Endothelial cell of umbilical vein (primary cell): ENCODE measurements at regions of chr11 and their contacts with region 1.

Region 1: GRCh38 chr11:18395735-18396504 is 1.6 kb downstream of the LDHA start:
- DNase-seq: peak; percentile 100
- H3K4me3 ChIP-seq: peak overlapping the region; percentile 42 to 80 (median 65)
- H3K27ac ChIP-seq: peak overlapping the region; percentile 56
- H3K4me1 ChIP-seq: peaks cover 18% of the 10 kb centered on the region
- H3K27me3 ChIP-seq: no peaks in the 10 kb centered on the region
- CTCF ChIP-seq: no peak
- POLR2A ChIP-seq: peak; percentile 83

Region 2: DNA sequence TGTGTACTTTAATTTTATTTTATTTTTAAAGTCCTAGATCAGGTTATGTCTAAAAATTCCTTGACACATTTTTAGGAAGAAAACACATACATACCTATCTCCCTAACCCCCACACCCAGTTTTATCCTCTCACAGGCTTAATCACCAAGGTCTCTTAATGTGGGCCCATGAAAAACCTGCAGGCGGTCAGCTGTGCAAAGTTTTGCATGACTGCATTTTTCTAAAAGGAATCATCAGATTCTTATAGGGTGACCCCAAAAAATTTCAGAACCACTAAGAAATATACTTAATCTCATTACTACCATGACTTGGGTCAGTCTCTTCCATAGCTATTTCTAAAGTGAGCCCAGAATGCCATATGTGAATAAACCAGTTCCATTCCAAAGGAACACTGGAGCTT is 110.1 kb before region 1 on chr11:
- CTCF ChIA-PET with region 1: no interaction called
- POLR2A ChIA-PET with region 1: interaction called, 10 read pairs
- dilution Hi-C with region 1: no loop called
- intact Hi-C with region 1: no loop called
- DNase-seq: no peak
- H3K4me3 ChIP-seq: no peak overlapping the region
- H3K27ac ChIP-seq: no peak overlapping the region
- H3K4me1 ChIP-seq: no peaks in the 10 kb centered on the region
- H3K27me3 ChIP-seq: no peaks in the 10 kb centered on the region
- CTCF ChIP-seq: no peak
- POLR2A ChIP-seq: no peak

Region 3: DNA sequence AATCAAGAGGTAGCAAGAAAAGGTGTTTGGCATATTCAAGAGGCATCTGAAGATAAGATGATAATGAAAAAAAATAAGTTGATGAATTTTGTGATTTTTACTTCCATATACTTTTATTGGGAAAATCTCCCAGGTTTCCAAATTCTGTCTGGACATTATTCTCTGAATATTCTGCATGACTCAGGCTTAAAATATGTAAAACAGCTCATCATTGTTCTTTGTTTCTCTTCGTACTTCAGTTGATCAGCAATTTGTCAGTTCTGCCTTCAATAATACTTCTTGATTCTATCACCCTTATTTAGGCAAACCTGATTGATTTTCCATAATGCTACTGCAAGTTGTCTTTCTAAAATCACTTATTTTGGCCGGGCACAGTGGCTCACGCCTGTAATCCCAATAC is 43.3 kb before region 1 on chr11:
- CTCF ChIA-PET with region 1: interaction called, 3 read pairs
- POLR2A ChIA-PET with region 1: no interaction called
- dilution Hi-C with region 1: no loop called
- intact Hi-C with region 1: loop called (anchors 5 kb)
- DNase-seq: no peak
- H3K4me3 ChIP-seq: no peak overlapping the region
- H3K27ac ChIP-seq: no peak overlapping the region
- H3K4me1 ChIP-seq: peaks cover 8% of the 10 kb centered on the region
- H3K27me3 ChIP-seq: no peaks in the 10 kb centered on the region
- CTCF ChIP-seq: no peak
- POLR2A ChIP-seq: no peak

Region 4: GRCh38 chr11:18368221-18368620 is 27.7 kb before region 1 on chr11:
- CTCF ChIA-PET with region 1: no interaction called
- POLR2A ChIA-PET with region 1: interaction called, 11 read pairs
- dilution Hi-C with region 1: no loop called
- intact Hi-C with region 1: no loop called
- DNase-seq: no peak
- H3K4me3 ChIP-seq: no peak overlapping the region
- H3K27ac ChIP-seq: no peak overlapping the region
- H3K4me1 ChIP-seq: no peaks in the 10 kb centered on the region
- H3K27me3 ChIP-seq: no peaks in the 10 kb centered on the region
- CTCF ChIP-seq: no peak
- POLR2A ChIP-seq: no peak

Region 5: GRCh38 chr11:18383388-18384156 is 12.3 kb before region 1 on chr11:
- CTCF ChIA-PET with region 1: interaction called, 27 read pairs
- POLR2A ChIA-PET with region 1: interaction called, 31 read pairs
- dilution Hi-C with region 1: no loop called
- intact Hi-C with region 1: loop called (anchors 1 kb)
- DNase-seq: peak; percentile 71
- H3K4me3 ChIP-seq: no peak overlapping the region
- H3K27ac ChIP-seq: peak overlapping the region; percentile 67
- H3K4me1 ChIP-seq: peaks cover 20% of the 10 kb centered on the region
- H3K27me3 ChIP-seq: no peaks in the 10 kb centered on the region
- CTCF ChIP-seq: no peak
- POLR2A ChIP-seq: no peak

Region 6: DNA sequence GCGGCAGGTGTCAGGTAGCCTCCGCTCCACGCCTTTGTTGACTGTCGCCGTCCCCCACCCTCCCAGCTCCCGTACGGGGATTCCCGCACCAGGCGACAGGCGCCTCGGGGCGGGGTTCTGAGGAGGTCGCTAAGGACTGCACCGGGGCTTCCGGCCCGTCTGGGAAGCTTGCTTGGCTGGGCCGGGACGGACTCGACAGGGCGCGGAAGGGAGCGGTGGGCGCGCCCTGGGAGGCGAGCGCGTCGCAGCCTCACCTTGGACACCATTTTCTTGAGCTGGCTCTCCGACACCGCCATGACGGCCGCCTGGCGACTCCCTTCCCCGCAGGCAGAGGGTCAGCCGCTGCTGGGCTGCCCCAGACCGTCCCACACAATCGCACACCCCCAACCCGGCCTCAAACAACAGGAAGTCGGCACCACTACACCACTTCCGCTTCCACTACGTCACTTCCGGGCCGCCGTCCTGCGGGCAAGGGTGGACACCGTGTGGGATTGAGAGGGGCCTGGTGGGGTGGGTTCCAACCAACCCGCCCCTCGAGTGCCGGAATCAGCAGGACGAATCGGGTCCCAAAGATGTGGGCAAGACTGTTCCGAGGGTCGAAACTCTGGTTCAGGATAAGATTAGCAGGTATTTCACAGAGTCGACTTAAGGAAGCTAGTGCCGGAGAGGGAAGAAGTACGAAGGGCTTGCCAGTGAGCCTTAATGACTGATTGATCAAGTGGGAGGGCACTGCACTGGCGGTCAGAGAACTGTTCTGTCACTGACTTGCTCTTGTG is 130.8 kb after region 1 on chr11 and contains the start of gene TSG101:
- CTCF ChIA-PET with region 1: interaction called, 3 read pairs
- POLR2A ChIA-PET with region 1: interaction called, 14 read pairs
- dilution Hi-C with region 1: no loop called
- intact Hi-C with region 1: loop called (anchors 1 kb)
- DNase-seq: peak; percentile 98
- H3K4me3 ChIP-seq: peak within 1 kb of the TSS; percentile 51 to 96 (median 74)
- H3K27ac ChIP-seq: peak within 1 kb of the TSS; percentile 99
- H3K4me1 ChIP-seq: peaks cover 15% of the 10 kb centered on the region
- H3K27me3 ChIP-seq: no peaks in the 10 kb centered on the region
- CTCF ChIP-seq: no peak
- POLR2A ChIP-seq: peak; percentile 96
- total RNA-seq, gene TSG101: 41.3 and 45.5 TPM in 2 replicates

Region 7: DNA sequence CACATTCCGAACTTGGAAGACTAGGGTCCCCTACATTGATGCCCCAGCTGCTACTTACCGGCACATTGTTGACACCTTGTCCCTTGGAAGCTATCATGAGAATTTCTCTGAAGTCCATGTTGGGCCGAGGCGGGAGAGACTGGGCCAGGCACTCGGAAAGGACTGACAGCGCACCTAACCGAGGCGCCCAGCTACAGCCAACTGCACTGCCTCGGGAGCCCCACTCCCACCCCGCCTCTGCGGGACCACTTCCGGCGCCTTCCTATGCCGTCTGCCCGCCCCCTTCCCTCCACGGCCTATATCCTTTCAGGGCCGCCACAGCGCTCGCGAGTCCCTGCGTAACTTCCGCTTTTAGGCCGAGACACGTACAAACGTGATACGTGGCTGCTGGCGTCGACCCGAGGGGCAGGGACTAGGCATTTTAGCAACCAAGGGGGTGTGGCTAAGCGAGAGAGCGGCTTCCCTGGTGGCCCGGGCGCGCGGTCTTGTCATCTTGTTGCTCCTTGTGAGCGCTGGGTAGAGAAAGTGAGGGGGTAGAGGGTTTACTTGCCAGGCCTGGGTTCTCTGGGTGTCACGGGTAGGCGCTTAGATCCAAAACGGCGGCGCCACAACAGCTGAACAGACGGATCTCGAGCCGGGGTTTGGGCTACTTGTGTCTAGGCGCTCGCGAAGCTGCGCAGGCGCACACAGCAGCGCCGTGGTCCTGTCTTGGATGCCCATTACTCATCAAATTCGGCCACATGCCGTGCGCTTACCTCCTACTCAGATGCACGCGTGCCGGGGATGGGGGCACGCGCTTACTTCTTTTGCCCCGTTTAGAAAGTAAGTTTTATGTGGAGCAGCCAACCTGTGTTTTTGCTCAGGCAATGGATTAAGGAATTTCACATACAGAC is 238.5 kb after region 1 on chr11 and contains the start of gene SPTY2D1:
- CTCF ChIA-PET with region 1: no interaction called
- POLR2A ChIA-PET with region 1: no interaction called
- dilution Hi-C with region 1: no loop called
- intact Hi-C with region 1: loop called (anchors 1 kb)
- DNase-seq: peak; percentile 99
- H3K4me3 ChIP-seq: peak within 1 kb of the TSS; percentile 79 to 99 (median 97)
- H3K27ac ChIP-seq: peak within 1 kb of the TSS; percentile 83
- H3K4me1 ChIP-seq: peaks cover 16% of the 10 kb centered on the region
- H3K27me3 ChIP-seq: peaks cover 0 to 1% of the 10 kb centered on the region in 2 experiments
- CTCF ChIP-seq: no peak
- POLR2A ChIP-seq: peak; percentile 96
- total RNA-seq, gene SPTY2D1: 13.7 and 18.7 TPM in 2 replicates

Region 8: DNA sequence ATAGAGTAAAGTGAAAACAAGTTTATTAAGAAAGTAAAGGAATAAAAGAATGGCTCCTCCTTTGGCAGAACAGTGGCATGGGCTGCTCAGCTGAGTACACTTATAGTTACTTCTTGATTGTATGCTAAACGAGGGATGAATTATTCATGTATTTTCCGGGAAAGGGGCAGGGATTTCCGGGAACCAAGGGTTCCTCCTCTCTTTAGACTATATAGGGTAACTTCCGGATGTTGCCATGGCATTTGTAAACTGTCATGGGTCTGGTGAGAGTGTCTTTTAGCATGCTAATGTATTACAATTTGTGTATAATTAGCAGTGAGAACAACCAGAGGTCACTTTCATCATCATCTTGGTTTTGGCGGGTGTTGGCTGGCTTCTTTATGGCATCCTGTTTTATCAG is 261.8 kb after region 1 on chr11:
- CTCF ChIA-PET with region 1: no interaction called
- POLR2A ChIA-PET with region 1: no interaction called
- dilution Hi-C with region 1: no loop called
- intact Hi-C with region 1: no loop called
- DNase-seq: no peak
- H3K4me3 ChIP-seq: no peak overlapping the region
- H3K27ac ChIP-seq: no peak overlapping the region
- H3K4me1 ChIP-seq: no peaks in the 10 kb centered on the region
- H3K27me3 ChIP-seq: no peaks in the 10 kb centered on the region
- CTCF ChIP-seq: no peak
- POLR2A ChIP-seq: no peak